Left cardiac atrium (tissue), 4 donors: ENCODE measurements at regions of chr1 and their contacts with region 1.

Region 1: GRCh38 chr1:156383023-156383422 is 14.0 kb downstream of the RHBG start:
- DNase-seq: peak; percentile 53
- ATAC-seq: peak; percentile 85 to 87

Region 2: DNA sequence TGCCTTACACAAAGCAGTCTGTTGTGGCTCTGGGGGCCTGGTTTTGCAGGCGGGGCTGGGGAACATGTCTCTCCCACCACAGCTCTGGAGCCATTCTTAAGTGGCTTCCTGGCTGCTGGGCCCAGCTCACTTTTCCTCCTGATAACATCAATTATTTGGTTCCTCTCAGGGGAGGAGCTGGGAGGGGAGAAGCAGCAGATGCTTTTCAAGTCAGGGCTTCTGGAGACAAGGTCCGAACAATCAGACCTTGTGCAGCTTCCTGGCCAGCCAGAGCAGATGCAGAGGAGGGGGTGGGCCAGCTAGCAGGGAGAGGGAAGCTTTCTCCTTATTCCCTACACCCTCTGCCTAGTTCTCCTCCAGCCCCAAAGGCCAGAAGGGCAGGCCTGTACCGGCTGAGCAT is 131.5 kb before region 1 on chr1:
- intact Hi-C with region 1: no loop called
- DNase-seq: no peak
- ATAC-seq: peak in 1 of 2 donors; percentile 41

Region 3: DNA sequence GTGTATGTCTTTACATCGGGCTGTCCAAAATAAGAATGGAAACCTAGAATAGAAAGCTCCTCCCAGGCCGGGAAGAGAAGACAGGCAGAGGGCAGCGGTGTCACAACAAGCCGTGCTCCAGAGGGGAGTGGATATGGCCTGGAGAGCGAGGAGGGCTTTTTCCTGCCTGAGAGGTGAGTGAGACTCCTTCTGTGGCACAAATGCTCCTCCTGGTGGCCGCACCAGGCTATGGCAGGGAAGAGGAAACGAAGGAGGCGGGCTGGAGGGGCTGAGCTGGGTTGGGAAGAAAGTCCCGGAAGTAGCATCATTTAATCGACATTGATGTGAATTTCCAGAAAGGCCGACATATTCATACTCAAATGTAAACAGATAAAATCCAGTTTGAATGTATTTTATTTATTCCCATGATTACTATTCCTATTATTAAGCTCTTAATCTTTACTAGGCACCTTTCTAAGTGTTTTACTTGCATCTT is 62.8 kb after region 1 on chr1:
- intact Hi-C with region 1: loop called (anchors 1 to 2 kb)
- DNase-seq: peak; percentile 79
- ATAC-seq: peak; percentile 93

Region 4: GRCh38 chr1:156539818-156540355 is 156.9 kb after region 1 on chr1:
- intact Hi-C with region 1: loop called in 1 of 2 experiments (anchors 10 kb)
- DNase-seq: no peak
- ATAC-seq: peak; percentile 31 to 66

Region 5: GRCh38 chr1:156601122-156601830 is 218.3 kb after region 1 on chr1 and contains the start of gene GPATCH4:
- intact Hi-C with region 1: loop called in 1 of 2 experiments (anchors 10 kb)
- DNase-seq: peak; percentile 87
- ATAC-seq: peak; percentile 90
- total RNA-seq, gene GPATCH4: 14.6 to 27.0 TPM

Region 6: GRCh38 chr1:156659994-156660751 is 277.1 kb after region 1 on chr1:
- intact Hi-C with region 1: loop called in 1 of 2 experiments (anchors 2 kb)
- DNase-seq: peak; percentile 98
- ATAC-seq: peak; percentile 78 to 87